AG04449 (cell line): ENCODE measurements at regions of chr22 and their contacts with region 1.

Region 1: GRCh38 chr22:37862570-37863325 is 13.5 kb downstream of the EIF3L start:
- DNase-seq: no peak
- H3K4me3 ChIP-seq: no peak overlapping the region
- CTCF ChIP-seq: no peak

Region 2: DNA sequence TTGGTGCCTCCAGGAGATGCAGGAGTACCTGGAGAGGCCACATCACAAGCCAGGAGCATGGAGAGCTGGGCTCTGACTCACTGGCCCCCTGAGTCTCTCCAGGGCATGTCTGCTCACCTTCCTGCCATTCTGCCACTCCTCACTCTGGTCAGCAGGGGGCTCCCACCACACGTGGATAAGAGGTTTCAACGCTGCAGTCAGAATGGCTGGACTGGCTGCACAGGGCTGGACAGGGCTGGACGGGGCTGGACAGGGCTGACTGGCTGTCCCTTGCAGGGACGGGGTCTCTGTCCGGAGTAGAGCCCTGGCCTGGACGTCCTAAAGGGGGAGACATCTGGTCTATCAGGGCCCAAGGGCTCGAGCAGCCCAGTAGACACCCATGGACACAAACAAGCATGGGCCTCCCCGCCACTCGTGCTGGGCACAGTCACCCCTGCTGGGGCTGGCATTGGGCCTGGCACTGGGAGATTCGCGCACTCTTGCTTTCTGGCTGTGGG is 545.8 kb before region 1 on chr22:
- CTCF ChIA-PET with region 1: no interaction called
- POLR2A ChIA-PET with region 1: no interaction called
- DNase-seq: no peak
- H3K4me3 ChIP-seq: no peak overlapping the region
- CTCF ChIP-seq: peak; percentile 96

Region 3: GRCh38 chr22:37658133-37659065 is 204.3 kb before region 1 on chr22 and contains the start of gene PDXP:
- CTCF ChIA-PET with region 1: interaction called, 11 read pairs
- POLR2A ChIA-PET with region 1: no interaction called
- DNase-seq: peak; percentile 100
- H3K4me3 ChIP-seq: peak within 1 kb of the TSS; percentile 78
- CTCF ChIP-seq: no peak

Region 4: DNA sequence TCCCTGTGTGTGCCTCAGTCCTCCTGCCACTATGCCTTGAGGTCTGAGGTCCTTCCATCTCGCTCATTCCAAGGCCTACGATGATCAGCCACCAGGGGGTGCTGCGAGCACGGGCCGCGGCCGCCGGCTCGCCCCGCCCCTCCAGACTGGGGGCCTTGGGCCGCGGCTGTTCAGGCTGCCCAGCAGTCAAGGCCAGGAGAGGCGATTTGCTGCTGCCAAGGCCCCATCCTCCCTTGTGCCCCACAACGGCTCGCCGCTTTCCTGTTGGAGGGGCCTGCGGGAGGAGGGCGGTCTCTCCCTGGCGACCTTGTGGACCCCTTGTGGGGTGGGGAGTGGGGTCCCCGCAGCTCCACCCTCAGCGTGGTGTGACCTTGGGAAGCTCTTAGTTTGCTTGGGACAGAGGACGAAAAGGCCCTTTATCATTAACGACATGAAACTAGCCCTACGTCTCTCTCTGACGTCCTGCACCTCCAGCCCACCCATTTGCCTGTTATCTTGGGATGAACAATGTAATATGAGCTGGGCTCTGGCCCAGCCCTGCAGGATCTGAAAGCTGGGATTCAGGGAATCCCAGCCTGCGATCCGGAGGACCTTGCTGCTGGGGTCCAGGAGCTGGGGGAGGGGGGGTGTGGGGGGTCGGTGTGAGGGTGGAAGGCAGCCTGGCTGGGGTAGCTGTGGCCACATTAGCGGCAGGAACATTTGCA is 44.9 kb before region 1 on chr22:
- CTCF ChIA-PET with region 1: interaction called, 223 read pairs
- POLR2A ChIA-PET with region 1: no interaction called
- DNase-seq: no peak
- H3K4me3 ChIP-seq: peak overlapping the region; percentile 10; the same call in 1 of the 2 replicates
- CTCF ChIP-seq: peak; percentile 90

Region 5: GRCh38 chr22:37843741-37843990 is 19.1 kb before region 1 on chr22:
- CTCF ChIA-PET with region 1: interaction called, 151 read pairs
- POLR2A ChIA-PET with region 1: interaction called, 6 read pairs
- DNase-seq: no peak
- H3K4me3 ChIP-seq: peak overlapping the region; percentile 70
- CTCF ChIP-seq: no peak

Region 6: DNA sequence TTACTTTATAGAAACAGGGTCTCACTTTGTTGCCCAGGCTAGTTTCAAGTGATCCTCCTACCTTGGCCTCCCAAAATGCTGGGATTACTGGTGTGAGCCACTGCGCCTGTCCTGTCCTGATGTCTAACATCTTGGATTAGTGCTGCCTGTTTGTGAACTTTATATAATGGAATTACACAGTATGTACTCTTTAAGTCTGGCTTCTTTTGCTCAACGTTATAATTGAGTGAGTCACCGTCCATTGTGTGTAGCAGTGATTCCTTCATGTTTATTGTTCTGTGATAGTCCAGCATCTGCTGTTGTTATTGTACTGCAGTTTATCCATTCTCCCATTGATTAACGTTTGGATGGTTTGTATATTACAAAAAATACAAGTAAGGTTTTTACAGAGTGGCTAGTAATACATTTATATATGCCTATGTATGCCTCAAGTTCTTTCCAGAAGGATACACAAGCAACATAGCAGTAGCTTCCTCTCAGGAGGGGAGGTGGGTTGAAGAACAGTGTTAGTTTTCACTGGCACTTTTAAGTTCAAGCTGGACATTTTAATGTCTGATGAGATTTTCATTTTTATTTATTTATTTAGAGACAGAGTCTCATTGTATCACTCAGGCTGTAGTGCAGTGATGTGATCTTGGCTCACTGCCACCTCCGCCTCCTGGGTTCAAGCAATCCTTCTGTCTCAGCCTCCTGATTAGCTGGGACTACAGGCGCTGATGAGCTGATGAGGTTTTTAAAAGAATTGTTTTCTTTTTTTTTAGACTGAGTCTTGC is 18.1 kb after region 1 on chr22:
- CTCF ChIA-PET with region 1: interaction called, 86 read pairs
- POLR2A ChIA-PET with region 1: no interaction called
- DNase-seq: no peak
- H3K4me3 ChIP-seq: no peak overlapping the region
- CTCF ChIP-seq: no peak

Region 7: GRCh38 chr22:37896181-37896592 is 33.4 kb after region 1 on chr22:
- CTCF ChIA-PET with region 1: interaction called, 20 read pairs
- POLR2A ChIA-PET with region 1: no interaction called
- DNase-seq: no peak
- H3K4me3 ChIP-seq: no peak overlapping the region
- CTCF ChIP-seq: no peak